ENCODE measurements at regions of chr10 and their contacts with region 1.

Region 1: GRCh38 chr10:96017191-96017687 is 26.1 kb upstream of the CCNJ start:
- DNase-seq: peak; percentile 10
- H3K4me3 Mint-ChIP-seq: no peak overlapping the region
- H3K27ac Mint-ChIP-seq: no peak overlapping the region
- H3K4me1 Mint-ChIP-seq: no peaks in the 10 kb centered on the region
- H3K27me3 Mint-ChIP-seq: peaks cover 3% of the 10 kb centered on the region

Region 2: GRCh38 chr10:95820363-95820762 is 196.9 kb before region 1 on chr10:
- CTCF ChIA-PET with region 1: no interaction called
- POLR2A ChIA-PET with region 1: no interaction called
- intact Hi-C with region 1: no loop called
- DNase-seq: no peak
- H3K4me3 Mint-ChIP-seq: no peak overlapping the region
- H3K27ac Mint-ChIP-seq: no peak overlapping the region
- H3K4me1 Mint-ChIP-seq: peaks cover 12% of the 10 kb centered on the region
- H3K27me3 Mint-ChIP-seq: peaks cover 6% of the 10 kb centered on the region

Region 3: GRCh38 chr10:95998255-95998784 is 18.9 kb before region 1 on chr10:
- CTCF ChIA-PET with region 1: interaction called, 30 read pairs
- POLR2A ChIA-PET with region 1: no interaction called
- intact Hi-C with region 1: no loop called
- DNase-seq: no peak
- H3K4me3 Mint-ChIP-seq: no peak overlapping the region
- H3K27ac Mint-ChIP-seq: no peak overlapping the region
- H3K4me1 Mint-ChIP-seq: no peaks in the 10 kb centered on the region
- H3K27me3 Mint-ChIP-seq: no peaks in the 10 kb centered on the region

Region 4: GRCh38 chr10:96129387-96130325 is 112.4 kb after region 1 on chr10 and contains the start of gene ZNF518A:
- CTCF ChIA-PET with region 1: interaction called, 8 read pairs
- POLR2A ChIA-PET with region 1: no interaction called
- intact Hi-C with region 1: loop called (anchors 2 kb)
- DNase-seq: peak; percentile 91
- H3K4me3 Mint-ChIP-seq: peak within 1 kb of the TSS; percentile 92
- H3K27ac Mint-ChIP-seq: peak within 1 kb of the TSS; percentile 99
- H3K4me1 Mint-ChIP-seq: peaks cover 20% of the 10 kb centered on the region
- H3K27me3 Mint-ChIP-seq: peaks cover 29% of the 10 kb centered on the region
- total RNA-seq, gene ZNF518A: 9.6 to 13.3 TPM

Region 5: GRCh38 chr10:96229568-96230030 is 212.4 kb after region 1 on chr10:
- CTCF ChIA-PET with region 1: interaction called, 26 read pairs
- POLR2A ChIA-PET with region 1: no interaction called
- intact Hi-C with region 1: no loop called
- DNase-seq: peak; percentile 76
- H3K4me3 Mint-ChIP-seq: no peak overlapping the region
- H3K27ac Mint-ChIP-seq: no peak overlapping the region
- H3K4me1 Mint-ChIP-seq: no peaks in the 10 kb centered on the region
- H3K27me3 Mint-ChIP-seq: peaks cover 1% of the 10 kb centered on the region

Region 6: GRCh38 chr10:96292971-96293920 is 276.0 kb after region 1 on chr10:
- CTCF ChIA-PET with region 1: interaction called, 9 read pairs
- POLR2A ChIA-PET with region 1: no interaction called
- intact Hi-C with region 1: loop called (anchors 1 kb)
- DNase-seq: peak; percentile 13
- H3K4me3 Mint-ChIP-seq: no peak overlapping the region
- H3K27ac Mint-ChIP-seq: no peak overlapping the region
- H3K4me1 Mint-ChIP-seq: peaks cover 2% of the 10 kb centered on the region
- H3K27me3 Mint-ChIP-seq: peaks cover 19% of the 10 kb centered on the region

Region 7: DNA sequence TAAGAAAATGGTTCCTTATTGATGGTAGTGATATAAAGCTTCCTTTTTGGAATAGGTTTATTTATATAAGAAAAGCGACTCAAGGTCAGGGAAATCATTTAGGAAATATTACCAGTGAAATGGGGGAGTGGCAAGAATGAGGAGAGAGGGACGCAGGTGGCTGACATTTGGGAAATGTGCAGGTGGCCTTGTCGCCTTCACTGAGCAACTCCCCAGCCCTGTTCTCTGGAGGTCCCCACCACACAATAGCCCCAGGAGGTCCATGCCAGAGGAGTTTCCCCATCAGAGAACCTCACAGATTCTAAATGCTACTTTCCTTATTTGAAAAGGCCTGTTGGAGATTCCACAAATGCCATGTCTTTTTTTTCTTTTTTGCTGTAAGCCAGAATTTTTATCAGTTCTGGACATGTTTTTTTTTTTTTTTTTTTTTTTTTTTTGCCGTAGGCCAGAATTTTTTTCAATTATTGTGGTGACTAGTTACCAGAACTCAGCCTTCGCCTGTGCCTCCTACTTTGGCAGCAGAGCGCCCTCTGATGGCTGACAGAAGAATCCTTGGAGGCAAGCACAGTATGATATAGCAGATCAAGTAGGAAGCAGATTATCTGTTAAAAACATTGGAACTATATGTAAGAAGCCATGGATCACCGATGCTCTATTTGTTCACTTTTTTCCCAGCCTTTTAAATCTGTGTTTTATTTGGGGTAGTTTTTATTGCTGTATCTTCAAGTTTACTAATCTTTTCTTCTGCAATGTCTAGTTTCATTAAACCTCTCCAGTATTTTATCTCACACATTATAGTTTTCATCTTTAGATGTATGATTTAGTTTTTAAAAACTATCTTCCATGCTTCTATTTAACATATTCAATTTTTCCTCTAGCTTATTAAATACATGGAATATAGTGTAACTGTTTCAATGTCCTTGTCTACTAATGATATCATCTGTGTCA is 323.0 kb after region 1 on chr10:
- CTCF ChIA-PET with region 1: interaction called, 30 read pairs
- POLR2A ChIA-PET with region 1: no interaction called
- intact Hi-C with region 1: loop called (anchors 2 kb)
- DNase-seq: peak; percentile 71
- H3K4me3 Mint-ChIP-seq: no peak overlapping the region
- H3K27ac Mint-ChIP-seq: no peak overlapping the region
- H3K4me1 Mint-ChIP-seq: peaks cover 7% of the 10 kb centered on the region
- H3K27me3 Mint-ChIP-seq: peaks cover 11% of the 10 kb centered on the region